ENCODE measurements at regions of chr1 and their contacts with region 1.

Region 1: GRCh38 chr1:2821966-2822620 is 20.6 kb upstream of the TTC34 start:
- DNase-seq: no peak
- H3K27ac ChIP-seq: no peak overlapping the region
- CTCF ChIP-seq: 0 out of 2 replicates have a peak, but pooled peaks have one; percentile 11

Region 2: DNA sequence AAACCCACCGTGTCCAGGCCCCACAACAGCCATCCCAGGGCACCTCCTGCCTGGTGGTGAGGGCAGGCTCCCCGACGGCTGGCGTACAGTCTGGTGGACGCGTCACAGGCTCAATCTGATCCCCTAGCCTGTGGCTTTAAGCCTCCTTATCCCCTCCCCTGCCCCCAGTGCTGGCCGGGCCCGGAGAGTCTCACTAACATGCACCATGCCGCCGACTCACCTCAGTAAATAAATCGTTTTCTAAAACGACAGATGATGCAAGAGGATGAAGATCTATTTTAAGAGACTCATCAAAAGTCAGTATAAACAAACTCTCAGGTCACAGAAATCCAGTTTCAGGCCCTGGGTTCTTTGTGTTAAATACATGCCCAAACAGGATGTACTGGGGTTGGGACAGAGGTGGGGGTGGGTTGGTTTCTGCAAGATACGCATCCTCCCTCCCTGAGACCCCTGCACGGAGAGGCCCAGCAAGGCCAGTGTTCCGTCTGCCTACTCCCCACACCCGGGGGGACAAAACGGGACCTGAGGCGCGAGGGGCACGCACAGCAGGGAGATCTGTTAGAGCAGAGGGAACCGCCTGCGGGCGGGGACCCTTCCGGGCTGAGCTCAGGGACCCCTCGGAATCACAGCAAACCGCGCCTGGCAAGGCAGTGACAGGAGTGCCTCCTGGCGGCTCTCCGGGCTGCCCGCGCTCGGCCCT is 298.8 kb before region 1 on chr1:
- CTCF ChIA-PET with region 1: no interaction called
- POLR2A ChIA-PET with region 1: no interaction called
- DNase-seq: no peak
- H3K27ac ChIP-seq: peak overlapping the region; percentile 93
- CTCF ChIP-seq: no peak

Region 3: GRCh38 chr1:2786329-2787162 is 35.5 kb before region 1 on chr1:
- CTCF ChIA-PET with region 1: no interaction called
- POLR2A ChIA-PET with region 1: no interaction called
- DNase-seq: no peak
- H3K27ac ChIP-seq: no peak overlapping the region
- CTCF ChIP-seq: no peak; the same call in 1 of the 2 replicates

Region 4: GRCh38 chr1:2833454-2834145 is 11.5 kb after region 1 on chr1:
- CTCF ChIA-PET with region 1: no interaction called
- POLR2A ChIA-PET with region 1: no interaction called
- DNase-seq: no peak
- H3K27ac ChIP-seq: no peak overlapping the region
- CTCF ChIP-seq: no peak

Region 5: GRCh38 chr1:3423245-3423829 is 601.2 kb after region 1 on chr1:
- CTCF ChIA-PET with region 1: interaction called, 13 read pairs
- POLR2A ChIA-PET with region 1: no interaction called
- DNase-seq: no peak
- H3K27ac ChIP-seq: no peak overlapping the region
- CTCF ChIP-seq: no peak